Ascending aorta (tissue), 2 donors: ENCODE measurements at regions of chr3 and their contacts with region 1.

Region 1: GRCh38 chr3:49133226-49133951 is 539 bp upstream of the LAMB2 start:
- DNase-seq: peak; percentile 33 to 92
- H3K4me3 ChIP-seq: peak overlapping the region; percentile 73 to 75
- H3K27ac ChIP-seq: peak overlapping the region; percentile 88 to 94
- H3K4me1 ChIP-seq: peaks cover 9 to 27% of the 10 kb centered on the region in 2 donors
- H3K27me3 ChIP-seq: no peaks in the 10 kb centered on the region
- CTCF ChIP-seq: no peak

Region 2: DNA sequence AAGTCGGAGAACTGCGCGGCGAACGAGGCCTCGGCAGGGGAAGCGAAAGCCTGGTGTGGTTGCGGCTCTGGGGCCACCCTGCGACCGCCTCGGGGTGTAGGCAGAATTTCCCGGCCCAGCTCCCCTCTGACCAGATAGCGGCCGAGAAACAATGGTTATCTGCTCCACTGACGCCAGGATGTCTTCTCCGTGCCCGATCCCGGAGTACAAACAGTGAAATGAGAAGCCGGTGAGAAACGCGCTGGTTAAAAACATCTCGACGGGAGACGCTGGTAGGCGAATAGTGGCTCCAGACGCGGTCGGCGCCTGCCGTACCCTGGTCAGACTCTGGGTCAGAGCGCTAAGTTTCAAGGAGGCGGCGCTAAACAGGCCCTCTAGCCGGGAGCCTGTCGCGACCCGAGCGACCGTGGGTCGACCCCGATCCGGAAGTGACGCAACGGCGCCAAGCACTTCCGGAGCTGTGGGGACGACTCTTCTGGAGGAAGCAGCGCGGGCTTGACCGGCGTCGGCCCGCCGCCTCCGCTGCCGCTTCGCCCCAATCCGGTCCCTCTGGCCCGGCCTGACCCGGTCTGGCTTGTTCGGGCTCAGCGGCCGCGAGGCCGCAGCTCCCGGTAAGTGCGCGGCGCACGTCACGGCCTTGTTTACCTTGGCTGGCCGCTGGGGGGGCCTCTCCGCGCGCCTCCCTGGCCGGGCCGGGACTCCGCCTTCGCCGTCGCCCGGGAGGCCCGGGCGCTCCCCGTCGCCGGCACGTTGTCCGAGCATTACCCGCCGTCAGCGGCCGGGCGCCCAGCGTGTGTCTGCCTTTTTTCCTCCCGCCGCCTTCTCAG is 214.8 kb before region 1 on chr3 and contains the start of gene ARIH2:
- intact Hi-C with region 1: loop called (anchors 5 kb)
- DNase-seq: peak; percentile 62 to 96
- H3K4me3 ChIP-seq: peak within 1 kb of the TSS; percentile 72 to 88
- H3K27ac ChIP-seq: peak within 1 kb of the TSS; percentile 95 to 98
- H3K4me1 ChIP-seq: peaks cover 0 to 9% of the 10 kb centered on the region in 2 donors
- H3K27me3 ChIP-seq: no peaks in the 10 kb centered on the region
- CTCF ChIP-seq: no peak
- total RNA-seq, gene ARIH2: 82.3 TPM

Region 3: DNA sequence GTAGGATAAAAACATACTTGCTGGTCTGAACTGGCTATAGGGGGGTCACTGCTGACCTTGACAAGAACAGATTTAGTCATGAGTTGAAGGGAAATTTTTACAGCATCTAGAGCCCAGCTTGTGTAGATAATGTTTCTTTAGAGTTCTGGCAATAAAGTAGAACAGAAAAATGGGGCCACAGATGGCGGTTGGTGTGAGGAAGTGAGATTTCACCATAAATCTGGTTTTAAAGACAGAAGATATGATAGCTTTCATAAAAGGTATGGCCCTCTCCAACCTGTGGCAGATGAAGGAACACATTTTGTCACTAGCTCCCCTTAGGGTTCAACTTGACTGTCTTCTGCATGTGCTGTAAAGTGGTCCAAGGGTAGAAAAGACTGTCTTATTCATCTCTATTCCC is 79.8 kb before region 1 on chr3:
- intact Hi-C with region 1: no loop called
- DNase-seq: no peak
- H3K4me3 ChIP-seq: no peak overlapping the region
- H3K27ac ChIP-seq: no peak overlapping the region
- H3K4me1 ChIP-seq: no peaks in the 10 kb centered on the region
- H3K27me3 ChIP-seq: no peaks in the 10 kb centered on the region
- CTCF ChIP-seq: no peak

Region 4: GRCh38 chr3:49093853-49094767 is 39.3 kb before region 1 on chr3 and contains the start of gene QRICH1:
- intact Hi-C with region 1: loop called (anchors 1 kb)
- DNase-seq: peak; percentile 94 to 99
- H3K4me3 ChIP-seq: peak within 1 kb of the TSS; percentile 97 to 98
- H3K27ac ChIP-seq: peak within 1 kb of the TSS; percentile 94 to 97
- H3K4me1 ChIP-seq: peaks cover 0 to 26% of the 10 kb centered on the region in 2 donors
- H3K27me3 ChIP-seq: no peaks in the 10 kb centered on the region
- CTCF ChIP-seq: peak; percentile 50 to 62 (median 60)
- total RNA-seq, gene QRICH1: 129 TPM

Region 5: GRCh38 chr3:49120438-49121131 is 12.8 kb before region 1 on chr3 and contains the start of gene USP19:
- intact Hi-C with region 1: loop called (anchors 1 kb)
- DNase-seq: peak; percentile 81 to 98
- H3K4me3 ChIP-seq: peak within 1 kb of the TSS; percentile 92
- H3K27ac ChIP-seq: peak within 1 kb of the TSS; percentile 92 to 96
- H3K4me1 ChIP-seq: peaks cover 15 to 19% of the 10 kb centered on the region in 2 donors
- H3K27me3 ChIP-seq: no peaks in the 10 kb centered on the region
- CTCF ChIP-seq: no peak
- total RNA-seq, gene USP19: 37.8 TPM

Region 6: GRCh38 chr3:49165771-49166751 is 32.7 kb after region 1 on chr3 and contains the start of gene CCDC71:
- intact Hi-C with region 1: loop called (anchors 1 kb)
- DNase-seq: peak in 1 of 2 donors; percentile 86
- H3K4me3 ChIP-seq: peak within 1 kb of the TSS; percentile 82 to 95
- H3K27ac ChIP-seq: peak within 1 kb of the TSS; percentile 86 to 93
- H3K4me1 ChIP-seq: peaks cover 5 to 23% of the 10 kb centered on the region in 2 donors
- H3K27me3 ChIP-seq: no peaks in the 10 kb centered on the region
- CTCF ChIP-seq: no peak
- total RNA-seq, gene CCDC71: 31.6 TPM

Region 7: GRCh38 chr3:49171119-49171774 is 37.9 kb after region 1 on chr3 and contains the start of gene KLHDC8B:
- intact Hi-C with region 1: loop called (anchors 1 kb)
- DNase-seq: peak; percentile 55 to 91
- H3K4me3 ChIP-seq: peak within 1 kb of the TSS; percentile 70 to 75
- H3K27ac ChIP-seq: peak within 1 kb of the TSS; percentile 82 to 92
- H3K4me1 ChIP-seq: peaks cover 18 to 37% of the 10 kb centered on the region in 2 donors
- H3K27me3 ChIP-seq: no peaks in the 10 kb centered on the region
- CTCF ChIP-seq: peak; percentile 93 to 98 (median 96)
- total RNA-seq, gene KLHDC8B: 57.5 TPM